ENCODE measurements at regions of chr19 and their contacts with region 1.

Region 1: GRCh38 chr19:40777937-40778705 is at the start of gene RAB4B:
- DNase-seq: peak; percentile 100
- ATAC-seq: peak; percentile 86 to 93
- H3K4me3 ChIP-seq: peak within 1 kb of the TSS; percentile 52
- H3K27ac ChIP-seq: peak within 1 kb of the TSS; percentile 84 to 87
- H3K4me1 ChIP-seq: peaks cover 14% of the 10 kb centered on the region
- CTCF ChIP-seq: no peak
- EP300 ChIP-seq: no peak
- POLR2A ChIP-seq: peak; percentile 61
- RAD21 ChIP-seq: no peak
- polyA plus RNA-seq, gene RAB4B: 20.7 and 25.0 TPM in 2 replicates

Region 2: GRCh38 chr19:40627486-40628279 is 150.4 kb before region 1 on chr19:
- CTCF ChIA-PET with region 1: no interaction called
- POLR2A ChIA-PET with region 1: no interaction called
- DNase-seq: no peak
- ATAC-seq: peak; percentile 31 to 55; a peak in 3 of 6 replicates
- H3K4me3 ChIP-seq: no peak overlapping the region
- H3K27ac ChIP-seq: no peak overlapping the region
- H3K4me1 ChIP-seq: peaks cover 6% of the 10 kb centered on the region; the same call in 2 of the 3 replicates
- CTCF ChIP-seq: no peak
- EP300 ChIP-seq: no peak
- POLR2A ChIP-seq: no peak
- RAD21 ChIP-seq: no peak

Region 3: DNA sequence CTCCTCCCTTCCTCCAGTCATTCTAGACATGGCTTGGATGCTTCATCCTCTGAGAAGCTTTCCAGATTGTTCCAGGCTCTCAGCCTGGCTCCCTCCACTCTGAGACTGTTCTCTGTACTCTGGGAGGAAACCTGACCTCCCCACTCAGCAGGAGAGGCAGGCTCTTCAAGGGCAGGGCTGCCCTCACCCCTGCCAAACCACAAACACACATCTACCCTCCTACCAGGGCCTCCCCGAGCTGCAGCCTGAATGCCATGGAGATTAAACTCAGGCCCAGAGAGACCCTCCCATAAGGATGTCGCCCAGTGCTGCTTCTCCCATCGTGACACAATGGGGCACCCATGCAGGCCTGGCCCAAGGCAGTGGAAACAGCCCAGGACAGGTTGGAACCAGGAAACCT is 103.8 kb before region 1 on chr19:
- CTCF ChIA-PET with region 1: no interaction called
- POLR2A ChIA-PET with region 1: no interaction called
- DNase-seq: no peak
- ATAC-seq: no peak; a peak in 1 of 6 replicates
- H3K4me3 ChIP-seq: no peak overlapping the region
- H3K27ac ChIP-seq: no peak overlapping the region
- H3K4me1 ChIP-seq: no peaks in the 10 kb centered on the region
- CTCF ChIP-seq: no peak
- EP300 ChIP-seq: no peak
- POLR2A ChIP-seq: no peak
- RAD21 ChIP-seq: no peak

Region 4: GRCh38 chr19:40690693-40691420 is 87.3 kb before region 1 on chr19:
- CTCF ChIA-PET with region 1: interaction called, 3 read pairs
- POLR2A ChIA-PET with region 1: interaction called, 16 read pairs
- DNase-seq: peak; percentile 98 to 100
- ATAC-seq: peak; percentile 60 to 89
- H3K4me3 ChIP-seq: peak overlapping the region; percentile 73
- H3K27ac ChIP-seq: peak overlapping the region; percentile 93 to 99
- H3K4me1 ChIP-seq: peaks cover 42% of the 10 kb centered on the region
- CTCF ChIP-seq: no peak
- EP300 ChIP-seq: peak in 1 of 2 experiments; percentile 20; a peak in 1 of 5 replicates
- POLR2A ChIP-seq: peak; percentile 79
- RAD21 ChIP-seq: no peak; a peak in 1 of 5 replicates

Region 5: DNA sequence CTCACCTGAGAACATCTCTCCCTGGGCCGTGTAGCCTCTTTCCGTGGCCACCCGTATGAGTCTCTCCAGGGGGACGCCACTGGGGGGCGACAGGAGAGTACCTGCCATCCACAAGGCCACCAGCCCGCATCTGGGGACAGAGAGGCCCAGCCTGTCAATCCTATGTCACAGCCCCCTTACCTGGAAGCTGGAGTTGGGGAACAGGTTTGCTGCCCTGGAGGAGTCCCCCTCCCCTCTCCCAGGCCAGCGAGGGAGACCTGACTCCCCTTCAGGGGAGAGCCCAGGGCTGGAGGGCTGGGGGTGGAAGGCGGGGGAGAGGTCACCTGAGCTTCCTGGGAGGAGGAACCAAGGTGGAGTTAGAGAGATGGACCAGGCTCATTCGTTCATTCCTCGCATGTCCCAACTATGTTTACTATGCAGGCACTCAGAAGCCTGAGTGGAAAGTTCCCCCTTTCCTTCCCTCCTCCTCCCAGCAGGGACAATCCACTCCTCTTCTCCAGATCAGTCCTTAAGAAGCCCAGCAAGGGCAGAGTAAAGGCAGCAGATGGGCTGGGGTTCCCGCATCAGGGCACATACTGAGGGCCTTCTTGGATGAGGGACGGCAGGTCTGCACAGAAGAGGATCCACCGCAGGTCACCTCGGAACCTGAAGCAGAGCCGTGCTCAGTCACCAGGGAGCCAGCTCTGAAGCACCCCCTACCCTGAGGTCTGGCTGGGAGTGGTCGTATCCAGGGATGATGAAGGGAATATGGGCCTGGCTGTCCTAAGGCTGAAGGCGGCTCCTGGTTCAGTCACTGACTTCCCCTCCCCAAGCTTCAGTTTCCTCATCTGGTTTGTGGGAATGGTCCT is 33.3 kb before region 1 on chr19:
- CTCF ChIA-PET with region 1: interaction called, 4 read pairs
- POLR2A ChIA-PET with region 1: interaction called, 94 read pairs
- DNase-seq: no peak
- ATAC-seq: peak; percentile 7 to 46; a peak in 4 of 6 replicates
- H3K4me3 ChIP-seq: no peak overlapping the region
- H3K27ac ChIP-seq: peak overlapping the region in 1 of 2 experiments; percentile 64; a peak in 3 of 6 replicates
- H3K4me1 ChIP-seq: peaks cover 28% of the 10 kb centered on the region
- CTCF ChIP-seq: peak; percentile 24; the same call in 1 of the 3 replicates
- EP300 ChIP-seq: no peak
- POLR2A ChIP-seq: no peak
- RAD21 ChIP-seq: peak; percentile 34; a peak in 4 of 5 replicates

Region 6: DNA sequence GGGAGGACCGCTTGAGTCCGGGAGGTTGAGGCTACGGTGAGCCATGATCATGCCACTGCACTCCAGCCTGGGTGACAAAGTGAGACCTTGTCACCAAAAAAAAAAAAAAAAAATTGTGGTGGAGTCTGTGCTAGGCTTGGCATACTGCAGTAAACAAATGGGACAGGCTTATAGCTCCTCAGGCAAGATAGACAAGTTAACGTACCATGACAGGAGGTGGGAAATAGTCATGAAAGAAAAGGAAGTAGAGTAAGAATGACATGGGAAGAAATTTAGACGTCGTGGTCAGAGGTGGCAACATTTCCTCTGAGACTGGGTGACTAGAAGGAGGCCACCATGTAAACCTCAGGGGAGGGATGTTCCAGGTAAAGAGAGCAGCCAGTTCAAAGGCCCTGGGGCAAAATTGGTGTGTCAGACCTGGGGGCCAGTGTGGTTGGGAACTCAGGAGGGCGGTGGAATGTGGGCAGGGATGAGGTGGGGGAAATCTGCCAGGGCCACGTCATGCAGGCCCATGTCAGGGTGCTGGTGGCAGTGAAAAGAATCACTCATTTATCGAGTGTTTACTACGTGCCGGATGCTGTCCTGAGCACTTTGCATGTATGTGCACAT is 21.5 kb before region 1 on chr19:
- CTCF ChIA-PET with region 1: interaction called, 16 read pairs
- POLR2A ChIA-PET with region 1: interaction called, 13 read pairs
- DNase-seq: no peak
- ATAC-seq: no peak
- H3K4me3 ChIP-seq: no peak overlapping the region
- H3K27ac ChIP-seq: no peak overlapping the region
- H3K4me1 ChIP-seq: peaks cover 40% of the 10 kb centered on the region
- CTCF ChIP-seq: no peak
- EP300 ChIP-seq: no peak
- POLR2A ChIP-seq: no peak
- RAD21 ChIP-seq: no peak

Region 7: DNA sequence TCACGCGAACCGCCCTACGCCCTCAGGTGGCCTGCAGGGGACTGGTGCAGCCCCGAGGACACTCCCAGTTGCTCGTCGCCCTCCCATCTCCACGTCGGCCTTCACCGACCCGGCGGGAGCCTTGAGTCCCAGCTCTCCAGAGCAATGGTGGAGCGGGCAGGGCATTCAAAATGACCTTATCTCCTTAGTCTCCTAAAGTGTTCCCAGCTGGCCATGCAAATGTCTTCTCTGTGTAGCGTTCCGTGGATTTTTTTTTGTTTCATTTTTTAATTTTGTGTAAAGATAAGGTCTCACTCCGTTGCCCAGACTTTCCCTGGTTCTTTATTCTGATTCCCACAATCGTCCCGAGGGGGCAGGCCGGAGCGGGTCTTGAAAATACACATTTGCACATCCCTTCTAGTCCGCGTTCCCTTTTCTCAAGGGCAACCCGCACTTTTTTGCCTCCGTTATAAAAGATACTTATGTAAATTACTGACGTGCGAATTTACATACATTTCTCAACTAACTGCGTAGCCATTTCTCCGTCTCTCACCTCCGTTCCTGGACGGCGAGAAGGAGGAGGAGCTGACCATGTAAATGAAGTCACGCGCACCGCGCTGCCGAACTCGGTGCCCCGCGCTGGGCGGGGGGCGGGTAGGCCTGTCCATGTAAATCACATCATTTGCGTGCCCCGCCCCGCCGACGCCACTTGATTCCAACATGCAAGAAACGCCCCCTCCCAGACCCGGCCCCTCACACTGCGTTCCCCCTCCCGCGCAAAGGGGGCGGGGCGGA is 20.3 kb after region 1 on chr19:
- CTCF ChIA-PET with region 1: interaction called, 65 read pairs
- POLR2A ChIA-PET with region 1: interaction called, 76 read pairs
- DNase-seq: peak; percentile 99 to 100
- ATAC-seq: peak; percentile 86 to 92
- H3K4me3 ChIP-seq: peak overlapping the region; percentile 84
- H3K27ac ChIP-seq: peak overlapping the region; percentile 95 to 96
- H3K4me1 ChIP-seq: peaks cover 42% of the 10 kb centered on the region
- CTCF ChIP-seq: peak; percentile 67
- EP300 ChIP-seq: no peak
- POLR2A ChIP-seq: 0 out of 2 replicates have a peak, but pooled peaks have one; percentile 23
- RAD21 ChIP-seq: 0 out of 5 replicates have a peak, but pooled peaks have one; percentile 11 to 33

Region 8: GRCh38 chr19:40889366-40889765 is 111.2 kb after region 1 on chr19:
- CTCF ChIA-PET with region 1: no interaction called
- POLR2A ChIA-PET with region 1: interaction called, 11 read pairs
- DNase-seq: no peak
- ATAC-seq: peak in 1 of 2 experiments; percentile 53; a peak in 3 of 6 replicates
- H3K4me3 ChIP-seq: no peak overlapping the region
- H3K27ac ChIP-seq: peak overlapping the region in 1 of 2 experiments; percentile 14; a peak in 1 of 6 replicates
- H3K4me1 ChIP-seq: 0 out of 3 replicates have a peak, but pooled peaks cover 9% of the 10 kb centered on the region
- CTCF ChIP-seq: no peak
- EP300 ChIP-seq: no peak
- POLR2A ChIP-seq: no peak
- RAD21 ChIP-seq: no peak

Measured in A549 (cell line).